Activated CD4-positive, alpha-beta memory T cell treated with anti-CD3 and anti-CD28 coated beads, Interleukin-2, amount 10 ng/mL, durations not matched to agents 7 days and 5 days (primary cell): ENCODE measurements at regions of chr3 and their contacts with region 1.

Region 1: DNA sequence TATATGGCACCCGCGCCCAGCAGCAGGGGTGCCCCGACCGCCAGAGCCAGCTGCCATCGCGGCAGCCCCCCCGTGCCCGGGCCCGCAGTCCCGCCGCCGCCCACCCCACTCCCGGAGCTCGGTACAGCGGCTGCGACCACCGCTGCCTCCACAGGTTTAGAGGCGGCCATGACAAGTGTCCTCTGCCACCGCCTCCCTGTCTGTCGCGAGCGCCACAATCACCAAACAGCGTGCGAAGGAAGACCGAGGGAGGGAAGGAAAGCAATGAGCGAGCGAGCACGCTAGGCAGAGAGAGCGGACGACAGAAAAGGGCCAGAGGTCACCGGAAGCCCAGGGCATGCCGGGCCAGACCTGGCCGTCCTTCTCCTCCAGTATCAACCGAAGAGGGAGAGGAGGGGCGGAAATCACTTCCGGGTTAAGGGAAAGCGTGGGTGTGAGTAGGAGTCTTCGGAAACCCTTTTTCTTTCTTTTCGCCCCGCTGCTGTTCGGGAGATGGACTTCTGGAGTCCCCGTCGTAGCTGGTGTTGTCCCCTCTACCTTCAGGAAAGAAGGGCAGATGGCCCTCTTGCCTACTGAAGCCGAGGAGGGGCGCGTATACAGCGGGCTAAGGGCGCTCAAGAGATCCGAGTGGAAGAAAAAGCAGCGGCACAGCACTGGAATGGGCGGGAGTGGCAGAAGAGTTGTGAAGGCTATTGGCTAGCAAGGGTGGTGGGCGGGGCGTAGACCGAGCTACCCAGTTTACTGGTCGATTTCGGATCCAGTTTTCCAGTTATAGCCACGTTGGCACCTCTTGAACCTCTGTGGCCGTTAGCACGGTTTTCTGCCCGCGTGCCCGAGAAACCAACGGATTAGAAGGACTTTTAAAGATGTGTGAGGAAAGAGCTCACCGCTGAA is at the starts of genes LNP1 and TOMM70:
- DNase-seq: peak; percentile 95
- H3K4me3 Mint-ChIP-seq: peak within 1 kb of the TSS; percentile 90
- H3K27ac Mint-ChIP-seq: peak within 1 kb of the TSS; percentile 97
- H3K4me1 Mint-ChIP-seq: peaks cover 66% of the 10 kb centered on the region
- H3K27me3 Mint-ChIP-seq: no peaks in the 10 kb centered on the region
- total RNA-seq, gene LNP1: 1.9 to 2.4 TPM
- total RNA-seq, gene TOMM70: 37.4 to 38.8 TPM

Region 2: DNA sequence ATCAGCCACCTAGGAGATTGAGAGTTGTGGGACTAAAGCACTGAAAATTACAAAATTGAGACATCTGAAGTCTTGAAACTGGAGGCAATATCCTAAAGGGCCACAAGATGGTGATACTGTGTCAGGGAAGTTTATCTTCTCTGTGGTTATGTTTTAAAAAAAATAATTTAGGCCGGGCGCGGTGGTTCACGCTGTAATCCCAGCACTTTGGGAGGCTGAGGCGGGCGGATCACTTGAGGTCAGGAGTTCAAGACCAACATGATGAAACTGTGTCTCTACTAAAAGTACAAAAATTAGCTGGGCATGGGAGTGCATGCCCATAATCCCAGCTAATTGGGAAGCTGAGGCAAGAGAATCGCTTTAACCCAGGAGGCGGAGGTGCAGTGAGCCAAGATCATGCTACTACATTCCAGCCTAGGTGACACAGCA is 84.4 kb before region 1 on chr3:
- CTCF ChIA-PET with region 1: interaction called, 15 read pairs
- POLR2A ChIA-PET with region 1: interaction called, 7 read pairs
- DNase-seq: peak; percentile 43
- H3K4me3 Mint-ChIP-seq: no peak overlapping the region
- H3K27ac Mint-ChIP-seq: no peak overlapping the region
- H3K4me1 Mint-ChIP-seq: peaks cover 15% of the 10 kb centered on the region
- H3K27me3 Mint-ChIP-seq: no peaks in the 10 kb centered on the region

Region 3: GRCh38 chr3:100389025-100389424 is 12.0 kb before region 1 on chr3:
- CTCF ChIA-PET with region 1: interaction called, 3 read pairs
- POLR2A ChIA-PET with region 1: interaction called, 32 read pairs
- DNase-seq: no peak
- H3K4me3 Mint-ChIP-seq: no peak overlapping the region
- H3K27ac Mint-ChIP-seq: no peak overlapping the region
- H3K4me1 Mint-ChIP-seq: peaks cover 7% of the 10 kb centered on the region
- H3K27me3 Mint-ChIP-seq: no peaks in the 10 kb centered on the region

Region 4: DNA sequence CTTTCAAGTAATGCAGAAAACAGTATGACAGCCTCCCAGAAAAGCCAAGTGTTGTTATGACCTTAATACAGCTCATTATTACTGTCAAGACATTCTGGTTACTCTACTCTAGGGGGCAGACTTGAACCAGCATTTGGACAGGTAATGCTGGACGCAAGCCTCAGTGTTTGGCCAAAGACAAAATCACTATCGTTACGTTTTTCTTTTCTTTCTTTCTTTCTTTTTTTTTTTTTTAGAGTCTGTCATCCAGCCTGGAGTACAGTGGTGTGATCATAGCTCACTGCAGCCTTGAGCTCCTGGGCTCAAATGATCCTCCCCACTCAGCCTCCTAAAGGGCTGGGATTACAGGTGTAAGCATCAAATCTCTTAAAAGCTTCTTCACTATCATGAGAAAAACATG is 62.0 kb after region 1 on chr3:
- CTCF ChIA-PET with region 1: no interaction called
- POLR2A ChIA-PET with region 1: interaction called, 10 read pairs
- DNase-seq: no peak
- H3K4me3 Mint-ChIP-seq: no peak overlapping the region
- H3K27ac Mint-ChIP-seq: no peak overlapping the region
- H3K4me1 Mint-ChIP-seq: peaks cover 16% of the 10 kb centered on the region
- H3K27me3 Mint-ChIP-seq: no peaks in the 10 kb centered on the region

Region 5: DNA sequence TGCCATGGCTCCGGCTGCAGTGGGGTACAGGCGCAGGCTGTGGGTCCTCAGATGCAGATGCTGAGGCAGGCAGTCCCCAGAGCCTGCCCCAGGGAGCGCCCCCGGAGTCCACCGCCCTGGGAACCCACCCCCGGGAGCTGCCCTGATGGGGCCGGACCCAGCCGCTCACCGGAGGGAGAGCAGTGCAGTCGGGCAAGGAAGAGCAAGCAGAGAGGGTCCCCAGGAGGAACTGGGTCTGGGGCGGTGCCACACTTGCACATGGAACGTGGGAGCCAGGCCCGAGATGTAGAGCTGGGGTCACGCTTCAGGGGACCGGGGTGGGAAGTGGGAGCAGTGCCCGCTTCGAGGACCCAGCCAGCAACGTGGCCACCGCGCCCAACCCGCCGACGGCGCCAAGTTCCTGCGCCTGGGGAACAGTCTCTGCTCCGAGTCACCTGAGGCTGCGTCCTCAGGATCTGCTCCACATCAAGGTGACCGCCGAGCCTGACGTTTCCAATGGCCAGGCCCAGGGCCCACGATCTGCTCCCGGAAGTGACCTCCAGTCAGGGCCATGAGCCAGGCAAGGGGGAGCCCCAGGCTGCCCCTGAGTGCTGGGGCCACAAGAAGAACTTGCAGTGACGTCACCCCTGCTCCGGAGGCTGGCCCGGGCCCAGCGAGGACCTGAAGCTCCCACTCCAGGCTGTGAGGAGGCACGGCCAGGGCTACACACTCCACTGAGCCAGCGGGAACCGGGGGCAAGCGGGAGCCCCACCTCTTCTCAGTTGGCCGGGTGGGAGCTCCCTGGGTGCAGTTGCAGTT is 281.2 kb after region 1 on chr3:
- CTCF ChIA-PET with region 1: no interaction called
- POLR2A ChIA-PET with region 1: no interaction called
- DNase-seq: no peak
- H3K4me3 Mint-ChIP-seq: no peak overlapping the region
- H3K27ac Mint-ChIP-seq: no peak overlapping the region
- H3K4me1 Mint-ChIP-seq: no peaks in the 10 kb centered on the region
- H3K27me3 Mint-ChIP-seq: peaks cover 4% of the 10 kb centered on the region